Breast epithelium (tissue), 4 donors: ENCODE measurements at regions of chr3 and their contacts with region 1.

Region 1: GRCh38 chr3:124032648-124033359 is 40.9 kb upstream of the ROPN1 start:
- DNase-seq: peak; percentile 74 to 88
- H3K4me3 ChIP-seq: peak overlapping the region; percentile 66 to 85 (median 84)
- H3K27ac ChIP-seq: peak overlapping the region; percentile 92
- H3K4me1 ChIP-seq: no peaks in the 10 kb centered on the region
- H3K27me3 ChIP-seq: no peaks in the 10 kb centered on the region
- CTCF ChIP-seq: peak in 2 of 3 donors; percentile 32 to 60
- POLR2A ChIP-seq: no peak

Region 2: DNA sequence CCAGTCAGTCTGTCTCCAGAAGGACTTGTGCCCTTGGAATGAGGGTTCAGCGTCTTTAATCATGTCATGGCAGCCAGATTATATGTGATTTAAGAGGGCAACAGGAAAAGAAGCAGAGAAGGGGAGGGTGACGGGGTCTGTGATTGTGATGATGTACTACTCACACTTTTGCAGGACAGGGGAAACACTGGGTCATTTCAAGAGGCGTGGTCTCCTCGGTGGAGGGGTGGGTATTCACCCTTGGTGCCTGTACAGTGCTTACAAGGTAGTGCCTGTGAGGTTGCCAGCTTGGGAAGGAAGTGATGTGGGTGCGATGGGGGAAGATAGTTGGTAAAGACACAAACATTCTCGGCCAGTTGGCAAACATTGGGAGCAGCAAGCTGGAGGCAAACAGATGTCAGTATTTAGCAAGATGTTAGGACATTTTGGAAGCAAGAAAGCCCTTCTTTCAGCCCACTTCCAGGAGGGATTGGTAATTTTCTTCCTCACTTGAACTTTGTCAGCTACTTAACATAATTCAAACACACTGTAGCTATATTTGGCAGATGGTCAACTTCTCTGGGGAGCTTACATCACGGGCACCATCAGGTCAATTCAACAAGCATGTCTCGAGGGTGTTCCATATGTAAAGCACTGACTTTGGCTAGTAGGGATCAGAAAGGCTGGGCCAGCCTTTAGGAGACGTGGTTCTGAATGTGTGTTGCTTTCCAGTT is 30.5 kb after region 1 on chr3:
- intact Hi-C with region 1: loop called (anchors 2 kb)
- DNase-seq: no peak
- H3K4me3 ChIP-seq: peak overlapping the region in 1 of 3 donors; percentile 5
- H3K27ac ChIP-seq: peak overlapping the region; percentile 26 to 68
- H3K4me1 ChIP-seq: peaks cover 3 to 17% of the 10 kb centered on the region in 2 donors
- H3K27me3 ChIP-seq: no peaks in the 10 kb centered on the region
- CTCF ChIP-seq: no peak
- POLR2A ChIP-seq: no peak

Region 3: DNA sequence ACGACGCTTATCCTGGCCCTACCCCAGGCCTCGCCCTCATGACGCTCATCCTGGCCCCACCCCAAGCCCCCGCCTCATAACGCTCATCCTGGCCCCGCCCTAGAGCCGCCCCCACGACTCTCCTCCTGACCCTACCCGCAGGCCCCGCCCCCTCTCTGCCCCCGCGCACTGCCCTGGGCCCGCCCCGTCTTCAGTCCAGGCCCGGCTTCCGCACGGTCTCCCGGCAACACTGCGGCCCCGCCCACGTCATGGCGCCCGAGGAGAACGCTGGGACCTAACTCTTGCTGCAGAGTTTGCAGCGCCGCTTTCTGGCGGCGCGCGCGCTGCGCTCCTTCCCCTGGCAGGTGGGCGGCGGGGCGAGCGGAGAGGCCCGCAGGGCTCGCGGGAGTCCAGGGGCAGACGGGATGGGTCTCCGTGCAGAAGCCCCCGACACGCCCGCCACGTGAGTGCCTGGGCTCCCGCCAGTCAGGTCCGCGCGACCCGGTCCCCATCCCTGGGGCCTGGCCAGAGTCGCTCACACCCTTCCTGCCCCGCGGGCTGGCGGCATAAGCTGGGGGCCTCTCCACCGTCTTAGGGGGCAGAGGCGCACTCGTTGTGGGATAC is 1883.7 kb after region 1 on chr3:
- intact Hi-C with region 1: loop called (anchors 5 kb)
- DNase-seq: peak in 1 of 2 donors; percentile 100
- H3K4me3 ChIP-seq: peak overlapping the region; percentile 52 to 75 (median 75)
- H3K27ac ChIP-seq: peak overlapping the region; percentile 92 to 93
- H3K4me1 ChIP-seq: no peaks in the 10 kb centered on the region
- H3K27me3 ChIP-seq: no peaks in the 10 kb centered on the region
- CTCF ChIP-seq: no peak
- POLR2A ChIP-seq: no peak